CD8-positive, alpha-beta T cell (primary cell): ENCODE measurements at regions of chr14 and their contacts with region 1.

Region 1: DNA sequence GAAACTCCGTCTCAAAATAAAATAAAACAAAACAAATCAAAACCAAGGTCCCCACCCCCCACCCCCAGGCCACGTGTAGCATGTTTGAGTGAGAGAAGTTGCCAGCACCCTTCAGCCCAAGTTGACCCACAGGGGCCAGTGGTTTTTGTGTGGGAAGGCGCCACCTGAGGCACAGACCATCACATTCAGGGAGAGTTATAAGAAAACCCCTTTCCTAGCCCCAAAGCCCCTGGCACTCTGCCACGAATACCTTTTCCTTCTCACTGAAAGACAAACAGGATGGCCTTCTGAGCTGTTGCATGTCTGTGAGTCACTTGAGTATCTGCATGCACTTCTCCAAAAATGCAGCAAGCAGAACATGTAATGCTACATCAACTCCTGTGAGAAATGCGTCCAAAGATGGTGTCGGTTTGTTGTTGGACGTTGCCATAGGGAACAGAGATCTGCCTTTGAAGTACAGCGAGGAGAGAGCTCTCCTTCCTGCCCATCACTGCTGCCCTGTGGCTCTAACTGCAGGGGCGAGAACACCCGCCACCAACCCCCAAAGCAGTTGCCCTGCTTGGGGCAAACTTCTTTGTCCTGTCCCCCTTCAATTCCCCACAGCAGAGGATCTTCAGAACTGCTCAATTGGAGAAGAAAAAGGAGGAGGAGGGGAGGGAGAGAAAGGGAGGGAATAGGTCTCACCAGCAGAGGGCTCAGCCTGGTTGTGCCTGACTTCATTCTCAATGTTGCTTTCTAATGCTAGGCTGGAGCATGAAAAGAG is 2.7 kb upstream of the TRAF3 start:
- DNase-seq: peak; percentile 32 to 87 (median 67)
- ATAC-seq: peak; percentile 32
- H3K4me3 ChIP-seq: no peak overlapping the region
- H3K4me3 Mint-ChIP-seq: peak overlapping the region; percentile 57
- H3K27ac ChIP-seq: peak overlapping the region; percentile 46 to 66
- H3K27ac Mint-ChIP-seq: peak overlapping the region; percentile 93
- H3K4me1 ChIP-seq: peaks cover 24% of the 10 kb centered on the region
- H3K4me1 Mint-ChIP-seq: peaks cover 28% of the 10 kb centered on the region
- H3K27me3 ChIP-seq: no peaks in the 10 kb centered on the region
- H3K27me3 Mint-ChIP-seq: no peaks in the 10 kb centered on the region
- CTCF ChIP-seq: peak; percentile 67

Region 2: DNA sequence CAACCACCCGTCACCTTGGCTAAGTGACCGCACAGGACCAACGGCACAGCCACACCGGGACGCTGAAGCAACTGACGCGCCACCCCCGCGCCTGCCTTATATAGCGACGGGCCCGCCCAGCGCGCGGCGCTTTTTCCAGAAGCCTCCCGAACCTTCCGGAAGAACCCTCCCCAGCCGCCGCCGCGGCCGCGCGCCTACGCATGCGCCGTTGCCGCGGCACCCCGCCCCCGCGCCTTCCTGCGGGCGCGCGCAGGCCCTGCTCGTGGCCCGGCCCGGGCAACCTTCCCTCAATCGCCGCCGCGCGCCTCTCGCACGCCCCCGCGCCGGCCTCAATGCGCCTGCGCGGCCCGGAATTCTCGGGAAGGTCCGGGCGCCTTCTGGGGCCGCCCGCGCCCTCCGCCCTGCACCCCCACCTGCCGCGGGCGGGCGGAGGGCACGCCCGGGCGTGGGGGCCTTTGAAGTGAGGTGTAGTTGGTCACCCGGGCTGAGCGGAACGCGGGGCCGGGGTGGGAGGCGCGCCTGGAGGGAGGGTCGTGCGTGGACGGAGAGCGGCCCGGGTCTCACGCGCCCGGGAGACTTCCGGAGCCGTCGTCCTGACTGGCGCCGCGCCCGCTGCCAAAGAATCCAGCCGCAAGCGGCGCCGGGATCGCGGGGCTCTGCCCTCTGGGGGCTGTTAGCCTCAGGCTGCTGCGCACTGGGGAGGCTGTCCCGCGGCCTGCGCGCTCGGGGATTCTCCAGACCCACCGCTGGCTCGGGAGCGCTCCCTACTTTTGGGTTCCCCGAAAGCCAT is 687.4 kb before region 1 on chr14 and contains the start of gene HSP90AA1:
- CTCF ChIA-PET with region 1: no interaction called
- POLR2A ChIA-PET with region 1: no interaction called
- intact Hi-C with region 1: loop called (anchors 2 to 5 kb)
- DNase-seq: peak; percentile 88 to 98 (median 95)
- ATAC-seq: peak; percentile 74
- H3K4me3 ChIP-seq: peak within 1 kb of the TSS; percentile 75 to 78
- H3K4me3 Mint-ChIP-seq: peak within 1 kb of the TSS; percentile 97
- H3K27ac ChIP-seq: peak within 1 kb of the TSS; percentile 96 to 97
- H3K27ac Mint-ChIP-seq: peak within 1 kb of the TSS; percentile 99
- H3K4me1 ChIP-seq: peaks cover 49% of the 10 kb centered on the region
- H3K4me1 Mint-ChIP-seq: peaks cover 58% of the 10 kb centered on the region
- H3K27me3 ChIP-seq: no peaks in the 10 kb centered on the region
- H3K27me3 Mint-ChIP-seq: no peaks in the 10 kb centered on the region
- CTCF ChIP-seq: no peak
- total RNA-seq, gene HSP90AA1: 532 to 539 TPM

Region 3: DNA sequence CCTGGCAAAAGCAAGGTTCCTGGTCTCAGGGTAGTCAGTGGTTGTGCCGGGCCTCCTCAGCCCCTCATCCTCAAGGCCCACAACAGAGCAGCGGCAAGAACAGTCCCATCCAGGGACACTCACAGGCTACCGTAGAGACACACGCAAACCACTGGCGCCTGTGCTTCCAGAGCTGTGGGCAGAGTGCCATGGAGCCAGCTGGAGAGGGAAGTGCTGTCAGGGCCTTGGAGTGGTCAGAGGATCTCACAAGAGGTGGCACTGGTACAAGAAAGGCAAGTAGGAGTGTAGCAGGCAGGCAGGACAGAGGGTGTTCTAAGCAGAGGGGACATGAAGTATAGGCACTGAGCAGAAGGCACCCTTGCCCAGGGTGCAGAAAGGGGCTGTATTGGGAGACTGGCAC is 299.6 kb before region 1 on chr14:
- CTCF ChIA-PET with region 1: no interaction called
- POLR2A ChIA-PET with region 1: no interaction called
- intact Hi-C with region 1: no loop called
- DNase-seq: no peak
- ATAC-seq: no peak
- H3K4me3 ChIP-seq: no peak overlapping the region
- H3K4me3 Mint-ChIP-seq: no peak overlapping the region
- H3K27ac ChIP-seq: no peak overlapping the region
- H3K27ac Mint-ChIP-seq: no peak overlapping the region
- H3K4me1 ChIP-seq: no peaks in the 10 kb centered on the region
- H3K4me1 Mint-ChIP-seq: peaks cover 8% of the 10 kb centered on the region
- H3K27me3 ChIP-seq: peaks cover 0 to 2% of the 10 kb centered on the region in 2 experiments
- H3K27me3 Mint-ChIP-seq: no peaks in the 10 kb centered on the region
- CTCF ChIP-seq: no peak

Region 4: GRCh38 chr14:102746634-102747438 is 27.7 kb before region 1 on chr14:
- CTCF ChIA-PET with region 1: no interaction called
- POLR2A ChIA-PET with region 1: no interaction called
- intact Hi-C with region 1: no loop called
- DNase-seq: no peak
- ATAC-seq: no peak
- H3K4me3 ChIP-seq: no peak overlapping the region
- H3K4me3 Mint-ChIP-seq: no peak overlapping the region
- H3K27ac ChIP-seq: no peak overlapping the region
- H3K27ac Mint-ChIP-seq: no peak overlapping the region
- H3K4me1 ChIP-seq: no peaks in the 10 kb centered on the region
- H3K4me1 Mint-ChIP-seq: no peaks in the 10 kb centered on the region
- H3K27me3 ChIP-seq: no peaks in the 10 kb centered on the region
- H3K27me3 Mint-ChIP-seq: no peaks in the 10 kb centered on the region
- CTCF ChIP-seq: no peak

Region 5: GRCh38 chr14:102903248-102903888 is 128.8 kb after region 1 on chr14:
- CTCF ChIA-PET with region 1: no interaction called
- POLR2A ChIA-PET with region 1: no interaction called
- intact Hi-C with region 1: no loop called
- DNase-seq: no peak
- ATAC-seq: no peak
- H3K4me3 ChIP-seq: no peak overlapping the region
- H3K4me3 Mint-ChIP-seq: no peak overlapping the region
- H3K27ac ChIP-seq: no peak overlapping the region
- H3K27ac Mint-ChIP-seq: no peak overlapping the region
- H3K4me1 ChIP-seq: peaks cover 18% of the 10 kb centered on the region
- H3K4me1 Mint-ChIP-seq: peaks cover 18% of the 10 kb centered on the region
- H3K27me3 ChIP-seq: no peaks in the 10 kb centered on the region
- H3K27me3 Mint-ChIP-seq: no peaks in the 10 kb centered on the region
- CTCF ChIP-seq: no peak

Region 6: GRCh38 chr14:102917469-102918211 is 143.1 kb after region 1 on chr14:
- CTCF ChIA-PET with region 1: interaction called, 9 read pairs
- POLR2A ChIA-PET with region 1: no interaction called
- intact Hi-C with region 1: loop called (anchors 1 to 2 kb)
- DNase-seq: peak; percentile 45 to 79 (median 65)
- ATAC-seq: peak; percentile 74
- H3K4me3 ChIP-seq: no peak overlapping the region
- H3K4me3 Mint-ChIP-seq: no peak overlapping the region
- H3K27ac ChIP-seq: no peak overlapping the region
- H3K27ac Mint-ChIP-seq: no peak overlapping the region
- H3K4me1 ChIP-seq: peaks cover under 1% of the 10 kb centered on the region
- H3K4me1 Mint-ChIP-seq: no peaks in the 10 kb centered on the region
- H3K27me3 ChIP-seq: peaks cover 0 to 3% of the 10 kb centered on the region in 2 experiments
- H3K27me3 Mint-ChIP-seq: no peaks in the 10 kb centered on the region
- CTCF ChIP-seq: peak; percentile 46

Region 7: DNA sequence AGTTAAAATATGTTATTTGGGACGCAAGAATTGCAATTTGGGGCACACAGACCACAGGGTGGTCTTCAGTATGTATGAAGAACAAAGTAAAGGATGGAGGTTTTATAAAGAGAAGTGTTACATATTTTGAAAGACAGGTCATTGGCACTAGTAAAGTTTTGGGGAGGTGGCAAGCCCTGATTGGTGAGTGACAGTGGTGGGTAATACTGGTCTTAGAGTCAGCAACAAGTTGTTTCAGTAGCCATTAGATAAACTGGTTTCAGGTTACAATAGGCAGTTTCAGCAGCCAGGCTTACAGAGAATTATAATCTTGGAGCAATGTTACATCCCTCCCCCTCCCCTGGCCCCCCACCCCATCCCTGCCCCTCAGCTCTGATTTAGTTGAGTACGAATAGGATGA is 628.1 kb after region 1 on chr14:
- CTCF ChIA-PET with region 1: no interaction called
- POLR2A ChIA-PET with region 1: no interaction called
- intact Hi-C with region 1: loop called in 1 of 2 experiments (anchors 5 kb)
- DNase-seq: no peak
- ATAC-seq: no peak
- H3K4me3 ChIP-seq: no peak overlapping the region
- H3K4me3 Mint-ChIP-seq: no peak overlapping the region
- H3K27ac ChIP-seq: no peak overlapping the region
- H3K27ac Mint-ChIP-seq: no peak overlapping the region
- H3K4me1 ChIP-seq: peaks cover 50% of the 10 kb centered on the region
- H3K4me1 Mint-ChIP-seq: peaks cover 59% of the 10 kb centered on the region
- H3K27me3 ChIP-seq: no peaks in the 10 kb centered on the region
- H3K27me3 Mint-ChIP-seq: no peaks in the 10 kb centered on the region
- CTCF ChIP-seq: no peak